ENCODE measurements at regions of chr12 and their contacts with region 1.

Region 1: DNA sequence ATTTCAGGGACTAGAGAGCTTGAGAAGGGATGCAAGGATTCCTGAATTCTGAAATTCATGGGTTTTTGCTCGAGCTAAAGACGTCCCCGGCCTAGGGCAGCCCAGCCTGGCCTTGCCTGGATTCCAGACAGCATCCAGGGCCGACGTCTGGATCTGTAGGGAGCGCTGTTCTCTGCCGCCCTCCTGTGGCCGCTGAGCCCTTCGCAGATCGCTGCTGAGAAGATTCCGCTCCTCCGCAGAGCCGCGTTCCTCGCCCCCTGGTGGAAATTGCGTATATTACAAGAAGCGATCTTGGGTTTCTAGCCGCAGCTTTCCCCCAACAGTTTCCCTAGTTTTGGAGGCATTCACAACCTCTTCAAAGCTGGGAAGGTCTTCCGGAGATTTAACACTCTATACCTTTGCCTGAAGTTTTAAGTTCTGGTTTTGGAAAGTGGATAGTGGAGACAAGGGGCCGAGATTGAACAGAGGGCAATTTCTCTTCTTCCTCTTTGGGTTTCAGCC is 5.1 kb downstream of the CISTR start:
- DNase-seq: peak; percentile 35
- ATAC-seq: peak; percentile 55
- H3K4me3 ChIP-seq: no peak overlapping the region
- H3K27ac ChIP-seq: no peak overlapping the region
- H3K4me1 ChIP-seq: peaks cover 9% of the 10 kb centered on the region
- H3K27me3 ChIP-seq: peaks cover 0 to 7% of the 10 kb centered on the region in 2 experiments; a peak in 1 of 4 replicates
- CTCF ChIP-seq: peak; percentile 100; a peak in 5 of 6 replicates
- EP300 ChIP-seq: no peak
- POLR2A ChIP-seq: no peak
- RAD21 ChIP-seq: peak; percentile 87

Region 2: DNA sequence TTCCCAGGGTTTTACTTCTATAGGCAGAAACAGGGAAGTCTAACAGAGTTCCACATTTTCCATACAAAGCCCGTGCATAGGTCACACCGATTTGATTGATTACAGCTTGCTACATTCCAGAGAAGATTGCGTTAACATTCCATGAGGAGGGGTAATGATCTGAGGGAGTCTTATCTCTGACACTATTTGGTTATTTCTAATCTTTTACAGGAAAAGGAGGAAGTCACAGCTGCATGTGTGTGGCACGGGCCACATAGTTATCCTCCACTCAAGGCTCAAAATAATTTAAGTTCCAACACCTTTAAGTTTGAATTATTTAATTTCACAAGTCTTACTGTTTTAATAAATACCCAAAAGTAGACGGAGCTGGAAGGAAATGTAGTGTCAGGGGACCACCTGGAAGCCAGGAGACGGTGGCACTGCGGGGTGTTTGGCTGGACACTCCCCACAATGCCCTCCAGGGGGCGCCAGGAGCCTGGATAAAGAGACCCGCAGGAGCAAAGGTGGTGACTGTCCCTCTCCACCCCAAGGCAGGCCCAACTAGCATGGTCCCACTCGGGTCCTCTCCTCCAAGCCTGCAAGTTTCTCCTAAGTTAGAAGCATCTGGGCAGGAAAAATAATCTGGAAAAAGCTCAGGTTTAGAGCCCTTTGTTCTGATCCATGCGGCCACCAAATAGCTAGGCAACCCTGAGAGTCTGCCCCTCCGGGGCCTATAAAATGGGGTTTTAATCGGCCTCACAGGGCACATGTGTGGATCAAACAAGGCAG is 861.9 kb before region 1 on chr12:
- CTCF ChIA-PET with region 1: no interaction called
- POLR2A ChIA-PET with region 1: no interaction called
- RAD21 ChIA-PET with region 1: no interaction called
- SMC1A ChIA-PET with region 1: no interaction called
- in situ Hi-C with region 1: no loop called
- intact Hi-C with region 1: no loop called
- DNase-seq: no peak
- ATAC-seq: peak; percentile 96
- H3K4me3 ChIP-seq: no peak overlapping the region
- H3K27ac ChIP-seq: no peak overlapping the region
- H3K4me1 ChIP-seq: no peaks in the 10 kb centered on the region
- H3K27me3 ChIP-seq: no peaks in the 10 kb centered on the region; a peak in 1 of 4 replicates
- CTCF ChIP-seq: peak; percentile 83 to 88 (median 87)
- EP300 ChIP-seq: no peak
- POLR2A ChIP-seq: no peak
- RAD21 ChIP-seq: peak; percentile 88

Region 3: DNA sequence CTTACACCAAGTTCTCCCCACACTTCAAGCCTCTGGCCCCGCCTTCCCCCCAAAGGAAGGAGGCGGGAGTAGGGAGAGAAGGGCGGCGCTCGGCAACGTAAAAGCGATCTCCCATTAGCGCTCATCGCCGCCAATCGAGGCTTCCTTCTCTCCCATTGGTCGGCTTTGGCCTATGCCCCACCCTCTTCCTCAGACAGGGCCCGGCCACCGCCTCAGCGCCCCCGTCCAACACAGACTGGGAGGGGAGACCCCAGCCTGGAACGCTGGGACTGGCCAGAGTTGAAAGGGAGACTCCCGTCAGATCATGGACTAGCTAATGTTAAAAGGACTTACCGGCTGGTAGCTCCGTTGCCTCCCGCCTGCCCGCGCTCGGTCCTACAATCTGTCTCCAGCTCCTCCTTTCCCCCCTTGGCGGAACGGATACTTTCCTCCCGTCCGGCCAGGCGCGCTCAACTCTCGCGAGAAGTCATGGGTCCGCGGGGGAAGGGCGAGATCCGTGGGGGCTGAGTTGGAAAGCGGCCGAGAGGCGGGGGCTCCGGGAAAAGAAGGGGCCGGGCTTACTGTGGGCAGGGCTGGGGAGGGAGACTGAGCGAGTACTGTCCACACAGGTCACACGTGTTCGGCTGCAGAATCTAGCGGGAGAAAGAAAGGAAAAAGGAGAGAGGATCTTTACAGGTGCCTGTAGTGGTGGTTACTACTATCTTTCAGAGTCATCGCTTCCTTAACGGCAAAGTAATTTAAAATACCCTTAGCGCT is 120.5 kb before region 1 on chr12 and contains the start of gene ATF7:
- CTCF ChIA-PET with region 1: interaction called, 12 read pairs
- POLR2A ChIA-PET with region 1: interaction called, 6 read pairs
- RAD21 ChIA-PET with region 1: no interaction called
- SMC1A ChIA-PET with region 1: interaction called, 3 read pairs
- in situ Hi-C with region 1: no loop called
- intact Hi-C with region 1: no loop called
- DNase-seq: peak; percentile 96
- ATAC-seq: peak; percentile 98
- H3K4me3 ChIP-seq: peak within 1 kb of the TSS; percentile 94
- H3K27ac ChIP-seq: peak within 1 kb of the TSS; percentile 96
- H3K4me1 ChIP-seq: no peaks in the 10 kb centered on the region
- H3K27me3 ChIP-seq: no peaks in the 10 kb centered on the region
- CTCF ChIP-seq: no peak
- EP300 ChIP-seq: 0 out of 4 replicates have a peak, but pooled peaks of 1 of the 2 experiments have one; percentile 23
- POLR2A ChIP-seq: peak; percentile 80
- RAD21 ChIP-seq: no peak
- polyA plus RNA-seq, gene ATF7: 21.8 to 26.8 TPM

Region 4: GRCh38 chr12:53684654-53685220 is 61.9 kb before region 1 on chr12:
- CTCF ChIA-PET with region 1: interaction called, 81 read pairs
- POLR2A ChIA-PET with region 1: no interaction called
- RAD21 ChIA-PET with region 1: interaction called, 5 read pairs
- SMC1A ChIA-PET with region 1: interaction called, 12 read pairs
- in situ Hi-C with region 1: no loop called
- intact Hi-C with region 1: no loop called
- DNase-seq: no peak
- ATAC-seq: no peak
- H3K4me3 ChIP-seq: no peak overlapping the region
- H3K27ac ChIP-seq: no peak overlapping the region
- H3K4me1 ChIP-seq: no peaks in the 10 kb centered on the region
- H3K27me3 ChIP-seq: no peaks in the 10 kb centered on the region
- CTCF ChIP-seq: no peak
- EP300 ChIP-seq: no peak
- POLR2A ChIP-seq: no peak
- RAD21 ChIP-seq: no peak

Region 5: GRCh38 chr12:53701518-53702260 is 45.0 kb before region 1 on chr12:
- CTCF ChIA-PET with region 1: interaction called, 459 read pairs
- POLR2A ChIA-PET with region 1: interaction called, 4 read pairs
- RAD21 ChIA-PET with region 1: interaction called, 70 read pairs
- SMC1A ChIA-PET with region 1: interaction called, 112 read pairs
- in situ Hi-C with region 1: loop called (anchors 5 kb)
- intact Hi-C with region 1: loop called (anchors 1 kb)
- DNase-seq: peak; percentile 20
- ATAC-seq: peak; percentile 99
- H3K4me3 ChIP-seq: no peak overlapping the region
- H3K27ac ChIP-seq: no peak overlapping the region
- H3K4me1 ChIP-seq: no peaks in the 10 kb centered on the region
- H3K27me3 ChIP-seq: peaks cover 8 to 29% of the 10 kb centered on the region in 2 experiments
- CTCF ChIP-seq: peak; percentile 96 to 99 (median 98); a peak in 5 of 6 replicates
- EP300 ChIP-seq: no peak
- POLR2A ChIP-seq: no peak
- RAD21 ChIP-seq: peak; percentile 92

Region 6: GRCh38 chr12:53719649-53720048 is 27.0 kb before region 1 on chr12:
- CTCF ChIA-PET with region 1: interaction called, 341 read pairs
- POLR2A ChIA-PET with region 1: no interaction called
- RAD21 ChIA-PET with region 1: interaction called, 48 read pairs
- SMC1A ChIA-PET with region 1: interaction called, 128 read pairs
- in situ Hi-C with region 1: no loop called
- intact Hi-C with region 1: no loop called
- DNase-seq: no peak
- ATAC-seq: no peak
- H3K4me3 ChIP-seq: no peak overlapping the region
- H3K27ac ChIP-seq: no peak overlapping the region
- H3K4me1 ChIP-seq: peaks cover 14% of the 10 kb centered on the region
- H3K27me3 ChIP-seq: no peaks in the 10 kb centered on the region
- CTCF ChIP-seq: no peak
- EP300 ChIP-seq: no peak
- POLR2A ChIP-seq: no peak
- RAD21 ChIP-seq: no peak

Region 7: GRCh38 chr12:53733051-53733806 is 13.4 kb before region 1 on chr12:
- CTCF ChIA-PET with region 1: interaction called, 341 read pairs
- POLR2A ChIA-PET with region 1: interaction called, 3 read pairs
- RAD21 ChIA-PET with region 1: interaction called, 48 read pairs
- SMC1A ChIA-PET with region 1: interaction called, 128 read pairs
- in situ Hi-C with region 1: no loop called
- intact Hi-C with region 1: no loop called
- DNase-seq: no peak
- ATAC-seq: no peak
- H3K4me3 ChIP-seq: no peak overlapping the region
- H3K27ac ChIP-seq: no peak overlapping the region
- H3K4me1 ChIP-seq: no peaks in the 10 kb centered on the region
- H3K27me3 ChIP-seq: peaks cover 6 to 14% of the 10 kb centered on the region in 2 experiments
- CTCF ChIP-seq: no peak
- EP300 ChIP-seq: no peak
- POLR2A ChIP-seq: no peak
- RAD21 ChIP-seq: no peak

Region 8: GRCh38 chr12:53764615-53765014 is 18.0 kb after region 1 on chr12:
- CTCF ChIA-PET with region 1: interaction called, 443 read pairs
- POLR2A ChIA-PET with region 1: interaction called, 9 read pairs
- RAD21 ChIA-PET with region 1: interaction called, 19 read pairs
- SMC1A ChIA-PET with region 1: interaction called, 11 read pairs
- in situ Hi-C with region 1: no loop called
- intact Hi-C with region 1: no loop called
- DNase-seq: no peak
- ATAC-seq: peak; percentile 21
- H3K4me3 ChIP-seq: no peak overlapping the region
- H3K27ac ChIP-seq: no peak overlapping the region
- H3K4me1 ChIP-seq: no peaks in the 10 kb centered on the region; the same call in 1 of the 2 replicates
- H3K27me3 ChIP-seq: peaks cover 0 to 5% of the 10 kb centered on the region in 2 experiments; a peak in 2 of 4 replicates
- CTCF ChIP-seq: no peak
- EP300 ChIP-seq: no peak
- POLR2A ChIP-seq: no peak
- RAD21 ChIP-seq: no peak

Region 9: DNA sequence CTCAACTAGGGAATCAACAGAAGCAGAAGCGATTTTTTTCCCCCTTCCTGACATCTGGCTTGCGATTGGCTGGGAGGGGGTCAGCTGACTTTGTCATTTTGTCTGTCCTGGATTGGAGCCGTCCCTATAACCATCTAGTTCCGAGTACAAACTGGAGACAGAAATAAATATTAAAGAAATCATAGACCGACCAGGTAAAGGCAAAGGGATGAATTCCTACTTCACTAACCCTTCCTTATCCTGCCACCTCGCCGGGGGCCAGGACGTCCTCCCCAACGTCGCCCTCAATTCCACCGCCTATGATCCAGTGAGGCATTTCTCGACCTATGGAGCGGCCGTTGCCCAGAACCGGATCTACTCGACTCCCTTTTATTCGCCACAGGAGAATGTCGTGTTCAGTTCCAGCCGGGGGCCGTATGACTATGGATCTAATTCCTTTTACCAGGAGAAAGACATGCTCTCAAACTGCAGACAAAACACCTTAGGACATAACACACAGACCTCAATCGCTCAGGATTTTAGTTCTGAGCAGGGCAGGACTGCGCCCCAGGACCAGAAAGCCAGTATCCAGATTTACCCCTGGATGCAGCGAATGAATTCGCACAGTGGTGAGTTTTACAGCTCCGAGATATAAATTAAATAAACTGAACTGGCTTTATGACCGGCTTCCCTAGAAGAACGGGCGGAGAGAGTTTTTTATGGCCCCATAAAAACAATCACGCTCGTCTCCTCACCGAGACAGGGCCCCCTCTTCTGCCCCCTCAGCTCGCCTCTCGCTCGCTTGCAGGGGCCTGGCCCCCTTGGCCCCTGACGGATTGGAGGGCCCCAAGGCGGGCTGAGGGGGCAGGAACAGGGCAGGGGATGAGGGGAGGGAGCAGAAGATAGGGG is 281.9 kb after region 1 on chr12 and contains the start of gene HOXC6:
- CTCF ChIA-PET with region 1: no interaction called
- POLR2A ChIA-PET with region 1: no interaction called
- RAD21 ChIA-PET with region 1: no interaction called
- SMC1A ChIA-PET with region 1: no interaction called
- in situ Hi-C with region 1: no loop called
- intact Hi-C with region 1: no loop called
- DNase-seq: no peak
- ATAC-seq: peak; percentile 63
- H3K4me3 ChIP-seq: peak within 1 kb of the TSS; percentile 38; the same call in 1 of the 2 replicates
- H3K27ac ChIP-seq: no peak within 1 kb of the TSS
- H3K4me1 ChIP-seq: peaks cover 13% of the 10 kb centered on the region
- H3K27me3 ChIP-seq: peaks cover 6 to 29% of the 10 kb centered on the region in 2 experiments
- CTCF ChIP-seq: no peak
- EP300 ChIP-seq: no peak
- POLR2A ChIP-seq: no peak
- RAD21 ChIP-seq: no peak
- polyA plus RNA-seq, gene HOXC6: 0.02 TPM in 1 of 2 experiments, not detected in the other

Region 10: GRCh38 chr12:54246011-54246641 is 499.5 kb after region 1 on chr12:
- CTCF ChIA-PET with region 1: no interaction called
- POLR2A ChIA-PET with region 1: no interaction called
- RAD21 ChIA-PET with region 1: no interaction called
- SMC1A ChIA-PET with region 1: no interaction called
- in situ Hi-C with region 1: no loop called
- intact Hi-C with region 1: no loop called
- DNase-seq: no peak
- ATAC-seq: no peak
- H3K4me3 ChIP-seq: no peak overlapping the region
- H3K27ac ChIP-seq: no peak overlapping the region
- H3K4me1 ChIP-seq: peaks cover 9% of the 10 kb centered on the region
- H3K27me3 ChIP-seq: no peaks in the 10 kb centered on the region
- CTCF ChIP-seq: no peak
- EP300 ChIP-seq: no peak
- POLR2A ChIP-seq: no peak
- RAD21 ChIP-seq: no peak

Measured in GM12878 (cell line).